K562 (cell line): ENCODE measurements at regions of chr18 and their contacts with region 1.

Region 1: DNA sequence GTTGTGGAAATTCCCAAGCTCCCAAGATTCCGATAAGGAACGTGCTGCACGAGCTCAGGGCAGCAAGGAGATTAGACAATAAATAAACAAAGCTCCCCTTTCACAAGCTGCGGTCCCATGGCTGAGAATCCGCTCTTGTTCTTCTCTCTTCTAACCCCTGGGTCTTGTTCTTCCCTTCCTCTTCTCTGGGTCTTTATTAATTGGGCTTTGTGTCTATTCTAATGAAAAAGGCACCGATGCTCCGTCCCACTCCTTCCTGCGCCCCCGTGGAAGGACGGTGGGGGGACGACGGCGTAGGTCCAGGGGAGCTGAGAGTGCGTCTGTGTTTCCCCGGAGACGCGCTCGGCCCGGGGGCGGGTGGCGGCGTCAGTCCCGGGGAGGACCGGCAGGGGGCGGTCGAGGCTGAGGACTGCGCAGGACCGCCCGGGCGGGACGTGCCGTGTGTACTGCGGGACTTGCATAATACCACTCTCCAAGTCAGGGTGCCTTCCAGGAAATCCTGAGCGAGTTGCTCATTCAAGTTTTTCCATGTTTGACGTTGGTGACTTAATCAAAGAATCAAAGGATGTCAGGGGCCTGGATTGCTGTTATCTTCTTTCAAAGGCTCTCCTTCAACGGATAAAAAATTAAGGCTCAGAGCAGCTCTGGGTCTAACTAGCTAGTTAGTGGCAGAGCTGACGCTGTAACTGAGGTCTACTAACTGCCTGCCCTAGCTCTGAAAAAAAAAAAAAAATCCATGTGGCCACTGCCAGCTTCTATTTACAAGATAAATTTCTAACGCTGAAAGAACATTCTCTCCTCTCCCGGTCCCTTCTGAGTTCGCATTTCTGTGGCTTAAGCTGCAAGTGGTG is 321.4 kb downstream of the TGIF1 start:
- DNase-seq: peak; percentile 84 to 93 (median 91)
- ATAC-seq: peak; percentile 100
- H3K4me3 ChIP-seq: peak overlapping the region; percentile 9; the same call in 1 of the 2 replicates
- H3K27ac ChIP-seq: no peak overlapping the region
- H3K4me1 ChIP-seq: peaks cover 6 to 8% of the 10 kb centered on the region in 2 experiments; a peak in 4 of 5 replicates
- H3K27me3 ChIP-seq: peaks cover 20% of the 10 kb centered on the region in 2 experiments; a peak in 4 of 5 replicates
- CTCF ChIP-seq: peak; percentile 91 to 97 (median 92)
- EP300 ChIP-seq: 0 out of 2 replicates have a peak, but pooled peaks have one; percentile 31
- POLR2A ChIP-seq: no peak
- RAD21 ChIP-seq: peak; percentile 87 to 94

Region 2: GRCh38 chr18:3710712-3711269 is 60.6 kb before region 1 on chr18:
- CTCF ChIA-PET with region 1: no interaction called
- POLR2A ChIA-PET with region 1: interaction called, 3 read pairs
- in situ Hi-C with region 1: no loop called
- intact Hi-C with region 1: loop called (anchors 2 kb)
- DNase-seq: peak in 1 of 4 experiments; percentile 31
- ATAC-seq: peak; percentile 9; the same call in 1 of the 3 replicates
- H3K4me3 ChIP-seq: no peak overlapping the region
- H3K27ac ChIP-seq: no peak overlapping the region
- H3K4me1 ChIP-seq: peaks cover 20 to 37% of the 10 kb centered on the region in 2 experiments; a peak in 4 of 5 replicates
- H3K27me3 ChIP-seq: peaks cover 7 to 15% of the 10 kb centered on the region in 2 experiments
- CTCF ChIP-seq: no peak
- EP300 ChIP-seq: no peak
- POLR2A ChIP-seq: no peak
- RAD21 ChIP-seq: no peak

Region 3: DNA sequence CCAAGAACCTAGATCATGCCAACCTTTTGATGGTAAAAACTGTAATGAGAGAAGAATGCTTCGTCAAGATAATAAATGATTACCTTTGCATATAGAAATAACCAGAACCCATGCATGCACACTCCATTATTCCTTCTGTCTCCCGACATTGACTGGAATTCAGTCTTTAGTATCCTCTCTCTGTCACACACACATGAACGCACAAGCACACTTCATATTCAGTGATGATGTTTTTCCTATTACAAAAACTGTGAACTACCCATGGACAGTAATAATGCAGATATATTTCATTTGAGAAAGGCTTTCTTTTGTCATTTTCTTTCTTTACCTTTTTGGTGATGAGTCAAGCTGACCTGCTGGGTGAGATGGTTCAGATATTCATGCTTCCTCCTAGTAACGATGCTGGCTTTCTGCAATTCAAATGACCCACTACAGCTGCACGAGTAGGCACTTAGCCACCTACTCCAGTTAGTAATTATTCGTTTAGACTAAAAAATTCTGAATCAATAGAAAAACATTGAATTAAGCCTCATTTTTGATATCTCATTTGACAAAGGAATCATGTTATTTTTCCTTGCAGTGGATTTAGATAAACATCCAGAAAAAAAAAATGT is 60.8 kb after region 1 on chr18:
- CTCF ChIA-PET with region 1: no interaction called
- POLR2A ChIA-PET with region 1: no interaction called
- in situ Hi-C with region 1: no loop called
- intact Hi-C with region 1: no loop called
- DNase-seq: no peak
- ATAC-seq: no peak
- H3K4me3 ChIP-seq: no peak overlapping the region
- H3K27ac ChIP-seq: no peak overlapping the region
- H3K4me1 ChIP-seq: no peaks in the 10 kb centered on the region
- H3K27me3 ChIP-seq: peaks cover 2 to 4% of the 10 kb centered on the region in 2 experiments; a peak in 3 of 5 replicates
- CTCF ChIP-seq: no peak
- EP300 ChIP-seq: no peak
- POLR2A ChIP-seq: no peak
- RAD21 ChIP-seq: no peak

Region 4: GRCh38 chr18:3869848-3870247 is 98.5 kb after region 1 on chr18:
- CTCF ChIA-PET with region 1: no interaction called
- POLR2A ChIA-PET with region 1: interaction called, 3 read pairs
- in situ Hi-C with region 1: no loop called
- intact Hi-C with region 1: loop called (anchors 1 kb)
- DNase-seq: peak in 3 of 4 experiments; percentile 14 to 61 (median 49)
- ATAC-seq: peak; percentile 93
- H3K4me3 ChIP-seq: no peak overlapping the region
- H3K27ac ChIP-seq: no peak overlapping the region
- H3K4me1 ChIP-seq: no peaks in the 10 kb centered on the region
- H3K27me3 ChIP-seq: no peaks in the 10 kb centered on the region
- CTCF ChIP-seq: peak; percentile 32 to 76 (median 57); a peak in 5 of 6 replicates
- EP300 ChIP-seq: no peak
- POLR2A ChIP-seq: no peak
- RAD21 ChIP-seq: peak; percentile 79 to 89

Region 5: DNA sequence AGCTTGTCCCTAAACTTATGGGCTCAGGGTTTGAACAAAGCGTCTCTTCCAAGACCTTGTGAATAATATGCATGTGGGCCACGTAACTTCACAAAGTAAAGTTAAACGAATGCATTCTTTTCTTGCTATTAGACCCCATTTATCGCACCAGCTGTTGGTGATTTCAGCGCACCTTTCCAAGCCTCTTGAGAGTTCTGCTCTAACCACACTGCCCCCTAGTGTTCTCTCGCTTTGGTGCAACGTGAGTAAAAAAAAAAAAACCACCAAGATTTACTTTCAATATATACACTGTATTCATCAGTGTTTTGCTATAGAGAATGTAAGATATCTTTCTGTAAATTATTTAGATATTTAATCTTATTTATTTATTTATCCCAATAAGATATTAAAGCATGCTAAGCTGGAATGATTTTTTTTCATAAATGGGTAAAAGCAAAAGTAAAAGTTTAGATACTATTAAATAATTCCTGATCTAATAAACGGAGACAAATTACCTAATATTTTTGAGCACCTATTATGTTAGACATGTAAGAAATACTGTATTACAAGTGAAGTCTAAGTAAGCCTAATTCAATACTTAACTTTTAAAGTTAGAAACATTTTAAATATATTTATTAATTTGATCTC is 224.2 kb after region 1 on chr18:
- CTCF ChIA-PET with region 1: interaction called, 9 read pairs
- POLR2A ChIA-PET with region 1: no interaction called
- in situ Hi-C with region 1: no loop called
- intact Hi-C with region 1: loop called (anchors 1 kb)
- DNase-seq: peak; percentile 38 to 84 (median 48)
- ATAC-seq: peak; percentile 84
- H3K4me3 ChIP-seq: no peak overlapping the region
- H3K27ac ChIP-seq: no peak overlapping the region
- H3K4me1 ChIP-seq: no peaks in the 10 kb centered on the region
- H3K27me3 ChIP-seq: peaks cover 0 to 5% of the 10 kb centered on the region in 2 experiments; a peak in 1 of 5 replicates
- CTCF ChIP-seq: peak; percentile 76 to 90 (median 80)
- EP300 ChIP-seq: no peak
- POLR2A ChIP-seq: no peak
- RAD21 ChIP-seq: peak; percentile 52 to 66; a peak in 3 of 4 replicates

Region 6: GRCh38 chr18:4096486-4096885 is 325.1 kb after region 1 on chr18:
- CTCF ChIA-PET with region 1: no interaction called
- POLR2A ChIA-PET with region 1: no interaction called
- in situ Hi-C with region 1: no loop called
- intact Hi-C with region 1: no loop called
- DNase-seq: no peak
- ATAC-seq: no peak
- H3K4me3 ChIP-seq: no peak overlapping the region
- H3K27ac ChIP-seq: no peak overlapping the region
- H3K4me1 ChIP-seq: no peaks in the 10 kb centered on the region
- H3K27me3 ChIP-seq: no peaks in the 10 kb centered on the region
- CTCF ChIP-seq: no peak
- EP300 ChIP-seq: no peak
- POLR2A ChIP-seq: no peak
- RAD21 ChIP-seq: no peak